ENCODE measurements at regions of chr7 and their contacts with region 1.

Region 1: GRCh38 chr7:139043823-139044812 is 8.3 kb upstream of the ZC3HAV1L start:
- DNase-seq: peak; percentile 88
- H3K4me3 Mint-ChIP-seq: peak overlapping the region; percentile 49
- H3K27ac Mint-ChIP-seq: peak overlapping the region; percentile 81
- H3K4me1 Mint-ChIP-seq: peaks cover 64% of the 10 kb centered on the region
- H3K27me3 Mint-ChIP-seq: no peaks in the 10 kb centered on the region

Region 2: GRCh38 chr7:139016931-139017511 is 27.1 kb before region 1 on chr7:
- intact Hi-C with region 1: loop called (anchors 2 kb)
- DNase-seq: peak; percentile 89
- H3K4me3 Mint-ChIP-seq: no peak overlapping the region
- H3K27ac Mint-ChIP-seq: no peak overlapping the region
- H3K4me1 Mint-ChIP-seq: peaks cover 7% of the 10 kb centered on the region
- H3K27me3 Mint-ChIP-seq: peaks cover 17% of the 10 kb centered on the region

Region 3: GRCh38 chr7:139060695-139061237 is 16.6 kb after region 1 on chr7:
- intact Hi-C with region 1: loop called (anchors 2 kb)
- DNase-seq: no peak
- H3K4me3 Mint-ChIP-seq: peak overlapping the region; percentile 28
- H3K27ac Mint-ChIP-seq: peak overlapping the region; percentile 74
- H3K4me1 Mint-ChIP-seq: peaks cover 61% of the 10 kb centered on the region
- H3K27me3 Mint-ChIP-seq: no peaks in the 10 kb centered on the region

Region 4: GRCh38 chr7:139212133-139212532 is 168.0 kb after region 1 on chr7:
- intact Hi-C with region 1: no loop called
- DNase-seq: no peak
- H3K4me3 Mint-ChIP-seq: no peak overlapping the region
- H3K27ac Mint-ChIP-seq: no peak overlapping the region
- H3K4me1 Mint-ChIP-seq: no peaks in the 10 kb centered on the region
- H3K27me3 Mint-ChIP-seq: peaks cover 26% of the 10 kb centered on the region

Measured in activated CD4-positive, alpha-beta T cell treated with anti-CD3 and anti-CD28 coated beads, Interleukin-2, amount 10 ng/mL, durations not matched to agents 24 days and 14 days (primary cell).